AG04450 (cell line): ENCODE measurements at regions of chr10 and their contacts with region 1.

Region 1: DNA sequence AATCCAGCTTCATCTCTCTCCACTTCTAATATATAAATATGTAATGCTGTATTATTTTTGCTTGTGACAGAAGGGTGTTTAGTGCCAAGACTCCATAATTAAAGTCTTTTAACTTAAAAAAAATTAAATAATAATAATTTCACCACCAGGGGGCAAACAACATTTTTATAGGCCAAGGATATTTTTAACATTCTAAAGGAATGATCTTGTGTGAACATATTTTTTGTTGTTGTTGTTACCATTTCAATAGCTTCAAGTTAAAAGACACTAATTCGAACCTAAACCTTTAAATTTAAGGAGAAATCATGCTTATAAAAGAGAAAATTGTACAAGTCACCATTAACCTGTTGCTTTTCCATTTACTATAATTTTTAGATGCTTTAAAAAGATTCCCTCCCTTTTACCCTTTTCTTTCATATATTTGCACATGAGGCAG is 7.5 kb upstream of the DNAJC1 start:
- DNase-seq: no peak
- H3K4me3 ChIP-seq: no peak overlapping the region
- H3K27ac ChIP-seq: no peak overlapping the region
- H3K27me3 ChIP-seq: no peaks in the 10 kb centered on the region
- CTCF ChIP-seq: no peak

Region 2: DNA sequence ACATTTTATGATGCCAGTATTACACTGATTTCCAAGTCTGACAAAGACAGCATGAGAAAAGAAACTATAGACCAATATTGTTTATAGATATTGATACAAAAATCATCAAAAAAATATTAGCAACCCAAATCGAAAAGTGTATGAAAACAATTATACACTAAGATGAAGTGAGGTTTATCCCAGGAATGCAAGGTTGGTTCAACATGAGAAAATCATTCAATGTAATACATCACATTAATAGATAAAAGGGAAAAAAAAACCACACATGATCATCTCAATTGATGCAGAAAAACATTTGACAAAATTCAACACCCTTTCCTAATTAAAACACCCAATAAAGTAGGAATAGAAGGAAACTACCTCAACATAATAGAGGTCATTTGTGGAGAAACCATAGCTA is 161.4 kb before region 1 on chr10:
- CTCF ChIA-PET with region 1: no interaction called
- POLR2A ChIA-PET with region 1: no interaction called
- DNase-seq: no peak
- H3K4me3 ChIP-seq: no peak overlapping the region
- H3K27ac ChIP-seq: no peak overlapping the region
- H3K27me3 ChIP-seq: no peaks in the 10 kb centered on the region
- CTCF ChIP-seq: no peak

Region 3: GRCh38 chr10:21927631-21928353 is 83.2 kb before region 1 on chr10:
- CTCF ChIA-PET with region 1: no interaction called
- POLR2A ChIA-PET with region 1: no interaction called
- DNase-seq: peak; percentile 51
- H3K4me3 ChIP-seq: no peak overlapping the region
- H3K27ac ChIP-seq: peak overlapping the region; percentile 40
- H3K27me3 ChIP-seq: no peaks in the 10 kb centered on the region
- CTCF ChIP-seq: no peak

Region 4: DNA sequence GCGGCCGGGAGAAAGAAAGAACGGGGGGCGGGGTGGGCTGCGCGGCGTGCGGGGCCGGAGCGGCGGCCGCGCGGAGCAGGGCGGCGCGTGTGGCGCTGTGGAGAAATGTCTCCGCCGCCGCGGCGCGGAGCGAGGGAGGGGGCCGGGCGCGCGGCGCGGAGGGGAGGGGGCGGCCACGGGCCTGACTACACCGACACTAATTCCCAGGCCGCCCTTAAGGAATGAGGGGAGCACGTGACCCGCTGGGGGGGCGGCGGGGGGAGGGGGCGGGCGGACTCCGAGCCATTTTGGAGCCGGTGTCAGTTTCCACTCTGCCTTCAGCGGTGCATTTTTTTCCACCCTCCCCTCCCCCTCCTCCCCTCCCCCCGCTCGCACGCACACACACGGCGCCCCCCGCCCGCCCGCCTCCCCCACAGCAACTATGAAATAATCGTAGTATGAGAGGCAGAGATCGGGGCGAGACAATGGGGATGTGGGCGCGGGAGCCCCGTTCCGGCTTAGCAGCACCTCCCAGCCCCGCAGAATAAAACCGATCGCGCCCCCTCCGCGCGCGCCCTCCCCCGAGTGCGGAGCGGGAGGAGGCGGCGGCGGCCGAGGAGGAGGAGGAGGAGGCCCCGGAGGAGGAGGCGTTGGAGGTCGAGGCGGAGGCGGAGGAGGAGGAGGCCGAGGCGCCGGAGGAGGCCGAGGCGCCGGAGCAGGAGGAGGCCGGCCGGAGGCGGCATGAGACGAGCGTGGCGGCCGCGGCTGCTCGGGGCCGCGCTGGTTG is 310.0 kb after region 1 on chr10 and contains the start of gene BMI1:
- CTCF ChIA-PET with region 1: no interaction called
- POLR2A ChIA-PET with region 1: no interaction called
- DNase-seq: peak; percentile 33
- H3K4me3 ChIP-seq: peak within 1 kb of the TSS; percentile 67
- H3K27ac ChIP-seq: no peak within 1 kb of the TSS
- H3K27me3 ChIP-seq: peaks cover 17% of the 10 kb centered on the region
- CTCF ChIP-seq: no peak
- polyA plus RNA-seq, gene BMI1: 40.4 and 50.4 TPM in 2 replicates

Region 5: GRCh38 chr10:23238015-23238414 is 1227.0 kb after region 1 on chr10:
- CTCF ChIA-PET with region 1: interaction called, 11 read pairs
- POLR2A ChIA-PET with region 1: no interaction called
- DNase-seq: no peak
- H3K4me3 ChIP-seq: no peak overlapping the region
- H3K27ac ChIP-seq: no peak overlapping the region
- H3K27me3 ChIP-seq: no peaks in the 10 kb centered on the region
- CTCF ChIP-seq: no peak